Caco-2 (cell line): ENCODE measurements at regions of chr5 and their contacts with region 1.

Region 1: DNA sequence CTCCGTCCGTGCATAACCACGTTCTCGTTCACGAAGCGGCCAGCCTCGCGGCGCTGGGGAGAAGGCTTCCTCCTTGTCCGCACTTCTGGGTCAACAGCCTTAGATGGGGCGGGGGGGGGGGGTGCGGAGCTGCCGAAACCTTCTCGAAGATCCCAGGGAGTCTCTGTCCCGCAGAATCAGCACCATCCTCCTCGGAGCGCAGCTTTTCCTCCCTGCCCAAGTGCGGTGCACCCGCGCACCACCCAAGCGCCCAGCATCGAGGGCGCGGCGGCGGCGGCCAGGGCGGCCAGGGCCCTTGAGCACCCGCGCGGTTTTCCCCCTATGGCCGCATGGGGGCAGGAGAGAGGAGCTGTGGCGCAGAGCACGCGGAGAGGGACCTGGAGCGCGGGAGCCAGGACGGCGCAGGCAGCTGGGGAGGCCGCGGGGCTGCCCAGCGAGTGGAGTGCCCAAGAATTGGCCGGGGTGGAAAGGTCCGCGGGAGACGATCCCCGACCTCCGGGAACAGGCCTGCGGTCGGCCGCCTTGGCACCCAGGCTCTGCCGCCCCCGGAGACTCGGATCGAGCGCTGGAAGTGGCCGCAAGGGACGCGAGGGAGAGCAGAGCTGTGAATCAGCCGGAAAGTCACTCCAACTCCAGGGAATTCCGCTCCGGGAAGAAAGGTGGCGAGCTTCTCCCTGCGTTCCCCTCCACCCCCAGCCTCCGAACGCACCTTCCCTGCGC is 43.1 kb downstream of the TMEM174 start:
- DNase-seq: peak; percentile 80 to 87
- H3K4me3 ChIP-seq: peak overlapping the region; percentile 41
- H3K4me3 Mint-ChIP-seq: peak overlapping the region; percentile 79
- H3K27ac Mint-ChIP-seq: peak overlapping the region; percentile 55
- H3K4me1 ChIP-seq: no peaks in the 10 kb centered on the region
- H3K4me1 Mint-ChIP-seq: peaks cover 6% of the 10 kb centered on the region
- H3K27me3 ChIP-seq: no peaks in the 10 kb centered on the region; the same call in 1 of the 2 replicates
- H3K27me3 Mint-ChIP-seq: peaks cover 3% of the 10 kb centered on the region
- CTCF ChIP-seq: peak; percentile 85 to 86

Region 2: DNA sequence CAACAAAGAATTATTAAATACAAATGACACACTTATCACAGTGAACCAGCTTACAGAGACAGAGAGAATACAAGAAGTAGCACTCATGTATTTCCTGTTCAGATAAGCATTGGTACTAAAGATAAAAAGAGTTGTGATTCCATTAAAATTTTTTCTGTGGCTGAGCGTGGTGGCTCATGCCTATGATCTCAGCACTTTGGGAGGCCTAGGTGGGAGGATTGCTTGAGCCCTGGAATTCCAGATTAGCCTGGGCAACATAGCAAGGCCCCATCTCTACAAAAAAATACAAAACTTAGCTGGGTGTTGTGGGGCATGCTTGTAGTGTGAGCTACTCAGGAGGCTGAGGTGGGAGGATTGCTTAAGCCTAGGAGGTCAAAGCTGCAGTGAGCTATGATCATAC is 227.3 kb before region 1 on chr5:
- CTCF ChIA-PET with region 1: no interaction called
- POLR2A ChIA-PET with region 1: no interaction called
- intact Hi-C with region 1: no loop called
- DNase-seq: no peak
- H3K4me3 ChIP-seq: no peak overlapping the region
- H3K4me3 Mint-ChIP-seq: no peak overlapping the region
- H3K27ac Mint-ChIP-seq: no peak overlapping the region
- H3K4me1 ChIP-seq: no peaks in the 10 kb centered on the region
- H3K4me1 Mint-ChIP-seq: no peaks in the 10 kb centered on the region
- H3K27me3 ChIP-seq: no peaks in the 10 kb centered on the region
- H3K27me3 Mint-ChIP-seq: no peaks in the 10 kb centered on the region
- CTCF ChIP-seq: no peak

Region 3: GRCh38 chr5:73081093-73081492 is 135.0 kb before region 1 on chr5:
- CTCF ChIA-PET with region 1: interaction called, 6 read pairs
- POLR2A ChIA-PET with region 1: no interaction called
- intact Hi-C with region 1: loop called (anchors 5 kb)
- DNase-seq: no peak
- H3K4me3 ChIP-seq: no peak overlapping the region
- H3K4me3 Mint-ChIP-seq: no peak overlapping the region
- H3K27ac Mint-ChIP-seq: no peak overlapping the region
- H3K4me1 ChIP-seq: no peaks in the 10 kb centered on the region
- H3K4me1 Mint-ChIP-seq: no peaks in the 10 kb centered on the region
- H3K27me3 ChIP-seq: no peaks in the 10 kb centered on the region
- H3K27me3 Mint-ChIP-seq: no peaks in the 10 kb centered on the region
- CTCF ChIP-seq: no peak

Region 4: GRCh38 chr5:73256862-73257261 is 40.8 kb after region 1 on chr5:
- CTCF ChIA-PET with region 1: no interaction called
- POLR2A ChIA-PET with region 1: no interaction called
- intact Hi-C with region 1: no loop called
- DNase-seq: no peak
- H3K4me3 ChIP-seq: no peak overlapping the region
- H3K4me3 Mint-ChIP-seq: no peak overlapping the region
- H3K27ac Mint-ChIP-seq: no peak overlapping the region
- H3K4me1 ChIP-seq: no peaks in the 10 kb centered on the region
- H3K4me1 Mint-ChIP-seq: no peaks in the 10 kb centered on the region
- H3K27me3 ChIP-seq: no peaks in the 10 kb centered on the region; the same call in 1 of the 2 replicates
- H3K27me3 Mint-ChIP-seq: peaks cover 4% of the 10 kb centered on the region
- CTCF ChIP-seq: no peak

Region 5: GRCh38 chr5:73274866-73275663 is 59.0 kb after region 1 on chr5:
- CTCF ChIA-PET with region 1: interaction called, 10 read pairs
- POLR2A ChIA-PET with region 1: no interaction called
- intact Hi-C with region 1: no loop called
- DNase-seq: no peak
- H3K4me3 ChIP-seq: no peak overlapping the region
- H3K4me3 Mint-ChIP-seq: no peak overlapping the region
- H3K27ac Mint-ChIP-seq: peak overlapping the region; percentile 71
- H3K4me1 ChIP-seq: peaks cover 22% of the 10 kb centered on the region
- H3K4me1 Mint-ChIP-seq: peaks cover 20% of the 10 kb centered on the region
- H3K27me3 ChIP-seq: no peaks in the 10 kb centered on the region
- H3K27me3 Mint-ChIP-seq: no peaks in the 10 kb centered on the region
- CTCF ChIP-seq: no peak

Region 6: GRCh38 chr5:73448463-73449136 is 232.5 kb after region 1 on chr5 and contains the start of gene FOXD1:
- CTCF ChIA-PET with region 1: interaction called, 29 read pairs
- POLR2A ChIA-PET with region 1: interaction called, 4 read pairs
- intact Hi-C with region 1: loop called (anchors 2 kb)
- DNase-seq: peak; percentile 78 to 82
- H3K4me3 ChIP-seq: peak within 1 kb of the TSS; percentile 68
- H3K4me3 Mint-ChIP-seq: peak within 1 kb of the TSS; percentile 81
- H3K27ac Mint-ChIP-seq: peak within 1 kb of the TSS; percentile 32
- H3K4me1 ChIP-seq: peaks cover 11% of the 10 kb centered on the region
- H3K4me1 Mint-ChIP-seq: no peaks in the 10 kb centered on the region
- H3K27me3 ChIP-seq: peaks cover 5% of the 10 kb centered on the region
- H3K27me3 Mint-ChIP-seq: peaks cover 25% of the 10 kb centered on the region
- CTCF ChIP-seq: no peak
- total RNA-seq, gene FOXD1: 2.8 and 3.1 TPM in 2 replicates